Dendritic cell treated with granulocyte-macrophage colony-stimulating factor and Interleukin-4, amounts not matched to agents 40 ng/mL and 50 ng/mL, for 4 days (primary cell): ENCODE measurements at regions of chr1 and their contacts with region 1.

Region 1: GRCh38 chr1:233394860-233395717 is 67.6 kb downstream of the MAP3K21 start:
- H3K4me3 Mint-ChIP-seq: no peak overlapping the region
- H3K27ac Mint-ChIP-seq: no peak overlapping the region
- H3K4me1 Mint-ChIP-seq: peaks cover 12% of the 10 kb centered on the region
- H3K27me3 Mint-ChIP-seq: peaks cover 16% of the 10 kb centered on the region

Region 2: DNA sequence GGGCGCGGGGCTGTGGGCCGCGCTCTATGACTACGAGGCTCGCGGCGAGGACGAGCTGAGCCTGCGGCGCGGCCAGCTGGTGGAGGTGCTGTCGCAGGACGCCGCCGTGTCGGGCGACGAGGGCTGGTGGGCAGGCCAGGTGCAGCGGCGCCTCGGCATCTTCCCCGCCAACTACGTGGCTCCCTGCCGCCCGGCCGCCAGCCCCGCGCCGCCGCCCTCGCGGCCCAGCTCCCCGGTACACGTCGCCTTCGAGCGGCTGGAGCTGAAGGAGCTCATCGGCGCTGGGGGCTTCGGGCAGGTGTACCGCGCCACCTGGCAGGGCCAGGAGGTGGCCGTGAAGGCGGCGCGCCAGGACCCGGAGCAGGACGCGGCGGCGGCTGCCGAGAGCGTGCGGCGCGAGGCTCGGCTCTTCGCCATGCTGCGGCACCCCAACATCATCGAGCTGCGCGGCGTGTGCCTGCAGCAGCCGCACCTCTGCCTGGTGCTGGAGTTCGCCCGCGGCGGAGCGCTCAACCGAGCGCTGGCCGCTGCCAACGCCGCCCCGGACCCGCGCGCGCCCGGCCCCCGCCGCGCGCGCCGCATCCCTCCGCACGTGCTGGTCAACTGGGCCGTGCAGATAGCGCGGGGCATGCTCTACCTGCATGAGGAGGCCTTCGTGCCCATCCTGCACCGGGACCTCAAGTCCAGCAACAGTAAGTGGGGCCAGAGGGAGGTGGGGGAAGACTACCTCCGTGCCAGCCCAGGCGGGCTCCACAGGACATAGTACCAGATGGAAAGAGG is 66.8 kb before region 1 on chr1:
- intact Hi-C with region 1: no loop called
- H3K4me3 Mint-ChIP-seq: peak overlapping the region; percentile 73
- H3K27ac Mint-ChIP-seq: peak overlapping the region; percentile 53
- H3K4me1 Mint-ChIP-seq: peaks cover 30% of the 10 kb centered on the region
- H3K27me3 Mint-ChIP-seq: peaks cover 12% of the 10 kb centered on the region

Region 3: DNA sequence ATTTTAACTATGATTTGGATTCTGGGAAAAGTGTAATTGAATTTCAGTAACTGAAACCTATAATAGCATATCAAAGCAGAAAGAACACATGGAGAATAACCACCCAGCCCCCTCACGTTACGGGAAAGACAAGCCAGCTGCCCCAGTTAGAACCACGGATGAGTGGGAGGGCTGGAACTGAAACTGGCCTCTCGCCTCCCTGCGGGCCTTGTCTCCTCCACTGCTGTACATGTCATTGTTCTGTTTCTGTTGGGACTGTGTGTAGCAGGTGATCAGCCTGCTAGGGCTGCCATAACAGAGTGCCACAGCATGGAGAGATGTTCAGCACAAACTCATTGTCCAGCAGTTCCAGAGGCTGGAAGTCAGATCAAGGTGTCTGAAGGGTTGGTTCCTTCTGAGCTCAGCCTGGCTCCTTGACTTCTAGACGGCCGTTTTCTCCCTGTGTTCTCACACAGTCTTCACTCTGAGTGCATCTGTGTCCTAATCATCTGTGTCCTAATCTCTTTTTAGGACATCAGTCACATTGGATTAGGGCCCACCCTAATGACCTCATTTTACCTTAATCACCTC is 15.1 kb before region 1 on chr1:
- intact Hi-C with region 1: no loop called
- H3K4me3 Mint-ChIP-seq: no peak overlapping the region
- H3K27ac Mint-ChIP-seq: no peak overlapping the region
- H3K4me1 Mint-ChIP-seq: peaks cover 18% of the 10 kb centered on the region
- H3K27me3 Mint-ChIP-seq: no peaks in the 10 kb centered on the region

Region 4: DNA sequence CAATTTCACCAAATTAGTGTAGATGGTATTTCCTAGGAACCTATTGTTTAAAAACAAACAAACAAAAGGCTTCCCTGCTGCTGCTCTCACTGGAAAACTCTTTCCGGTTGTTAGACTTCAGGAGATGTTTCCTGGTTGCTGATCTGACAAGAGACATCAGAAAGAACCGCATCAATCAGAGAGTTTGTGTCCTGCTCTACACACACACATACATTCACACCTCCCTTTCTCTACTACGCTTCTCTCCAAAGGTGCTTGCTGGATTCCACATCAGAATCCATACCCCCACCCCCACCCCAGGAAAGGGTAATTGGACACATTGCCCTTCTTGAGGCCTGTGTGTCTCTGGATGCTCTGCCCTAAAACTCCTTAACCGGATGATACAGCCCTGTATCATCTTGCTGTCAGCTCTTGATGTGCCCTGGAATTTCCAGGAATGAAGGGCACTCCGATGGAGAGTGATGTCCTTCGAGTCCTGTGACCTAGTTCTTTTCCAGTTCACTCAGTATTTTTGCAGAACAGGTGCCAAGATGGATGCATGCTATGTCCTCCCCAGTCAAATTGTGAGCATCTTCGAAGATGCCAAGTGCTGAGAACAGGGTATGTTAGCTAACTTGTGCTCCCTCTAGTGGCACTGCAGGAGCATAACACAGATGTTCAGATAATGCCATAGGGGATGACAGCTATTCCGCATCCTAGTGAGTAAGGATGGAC is 395.7 kb after region 1 on chr1:
- intact Hi-C with region 1: loop called (anchors 1 kb)
- H3K4me3 Mint-ChIP-seq: no peak overlapping the region
- H3K27ac Mint-ChIP-seq: no peak overlapping the region
- H3K4me1 Mint-ChIP-seq: no peaks in the 10 kb centered on the region
- H3K27me3 Mint-ChIP-seq: peaks cover 8% of the 10 kb centered on the region

Region 5: GRCh38 chr1:234065794-234066447 is 670.8 kb after region 1 on chr1:
- intact Hi-C with region 1: loop called (anchors 1 kb)
- H3K4me3 Mint-ChIP-seq: no peak overlapping the region
- H3K27ac Mint-ChIP-seq: no peak overlapping the region
- H3K4me1 Mint-ChIP-seq: no peaks in the 10 kb centered on the region
- H3K27me3 Mint-ChIP-seq: peaks cover 7% of the 10 kb centered on the region